ENCODE measurements at regions of chr11 and their contacts with region 1.

Region 1: DNA sequence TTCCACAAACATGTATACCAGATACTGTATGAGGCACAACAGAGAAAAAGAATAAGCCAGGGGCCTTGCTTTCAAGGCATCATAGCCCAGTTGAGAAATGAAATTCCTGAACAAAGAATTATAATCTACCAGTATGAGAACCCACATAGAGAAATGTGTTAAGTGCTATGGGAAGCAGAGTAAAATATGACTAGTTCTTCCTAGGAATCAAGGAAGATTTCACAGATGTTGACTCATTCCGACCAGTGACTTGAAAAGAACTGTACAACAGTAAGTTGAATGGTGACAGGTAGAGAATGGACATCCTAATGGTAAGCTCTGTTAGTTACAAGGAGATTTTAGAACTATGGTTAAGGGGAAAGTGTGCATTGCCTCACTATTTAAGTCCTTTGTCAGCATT is 102.6 kb downstream of the TRIM44 start:
- DNase-seq: no peak
- H3K4me3 ChIP-seq: no peak overlapping the region
- H3K27ac ChIP-seq: no peak overlapping the region
- H3K4me1 ChIP-seq: no peaks in the 10 kb centered on the region
- H3K27me3 ChIP-seq: no peaks in the 10 kb centered on the region
- CTCF ChIP-seq: no peak

Region 2: DNA sequence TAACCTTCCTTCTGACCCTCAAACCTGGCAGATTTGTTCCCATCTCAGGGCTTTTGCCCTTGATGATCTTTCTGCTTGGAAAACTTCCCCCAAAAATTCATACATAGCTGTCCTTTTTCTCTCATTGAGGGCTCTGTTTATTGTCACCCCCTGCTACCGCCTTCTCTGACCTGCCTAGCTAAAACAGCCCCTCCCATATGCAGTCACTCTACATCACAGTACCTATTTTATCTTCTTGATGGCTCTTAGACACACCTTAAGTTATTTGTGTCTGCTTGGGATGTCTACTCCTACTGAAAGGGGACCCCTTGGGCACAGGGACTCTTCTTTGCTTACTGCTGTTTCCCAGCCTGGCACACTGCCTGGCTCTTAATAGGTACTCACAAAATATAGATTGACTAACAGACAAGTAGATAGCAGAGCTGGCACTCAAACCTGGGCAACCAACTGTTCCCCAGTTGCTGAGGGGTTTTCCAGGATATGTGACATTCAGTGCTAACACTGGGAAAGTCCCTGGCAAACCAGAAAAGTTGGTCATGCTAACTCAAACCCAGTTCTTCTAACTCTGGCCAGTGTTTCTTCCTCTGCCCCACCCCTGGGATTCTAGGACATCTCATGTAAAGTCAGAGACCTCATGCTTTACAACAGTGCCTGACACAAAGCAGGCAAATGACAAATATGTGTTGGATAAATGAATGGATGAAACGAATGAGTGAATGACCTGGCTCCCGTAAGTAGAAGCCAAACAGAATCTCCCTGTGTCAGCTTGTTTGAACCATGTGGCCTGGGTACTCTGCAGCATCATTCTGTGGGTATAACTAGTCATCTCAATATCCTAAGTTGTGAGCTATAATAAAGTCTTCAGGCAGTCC is 166.7 kb before region 1 on chr11:
- CTCF ChIA-PET with region 1: no interaction called
- dilution Hi-C with region 1: no loop called
- in situ Hi-C with region 1: no loop called
- intact Hi-C with region 1: no loop called
- DNase-seq: peak; percentile 96
- H3K4me3 ChIP-seq: no peak overlapping the region
- H3K27ac ChIP-seq: peak overlapping the region; percentile 14
- H3K4me1 ChIP-seq: peaks cover 32% of the 10 kb centered on the region
- H3K27me3 ChIP-seq: no peaks in the 10 kb centered on the region
- CTCF ChIP-seq: no peak

Region 3: DNA sequence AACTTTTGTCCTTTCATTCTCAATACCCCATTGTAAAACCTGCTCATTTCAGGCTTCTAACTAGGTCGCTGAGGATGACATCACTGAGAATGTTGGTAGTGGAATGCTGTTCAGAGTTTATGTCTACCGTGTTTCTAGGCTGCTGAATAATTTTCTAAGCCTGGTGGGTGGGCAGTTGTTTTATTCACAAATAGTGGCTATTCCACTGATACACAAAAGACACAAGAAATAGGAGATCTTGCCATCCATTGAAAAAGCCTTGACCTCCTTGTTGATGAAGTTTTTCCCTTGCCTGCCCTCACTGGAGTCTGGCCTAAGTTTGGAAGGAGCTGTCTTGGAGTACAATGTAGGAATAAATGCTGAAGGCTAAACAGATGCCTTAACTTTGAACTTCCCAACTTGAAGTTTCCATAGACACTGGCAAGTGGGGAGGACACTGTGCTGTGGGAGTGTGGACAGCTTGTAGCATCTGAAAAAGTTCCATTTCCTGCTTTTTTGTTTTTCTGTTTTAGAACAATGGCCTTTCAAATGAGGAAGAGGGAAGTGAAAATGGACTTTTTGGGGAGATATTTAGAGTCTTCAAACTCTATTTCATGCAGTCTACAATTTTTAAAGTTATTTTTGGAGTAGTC is 43.4 kb before region 1 on chr11:
- CTCF ChIA-PET with region 1: no interaction called
- dilution Hi-C with region 1: loop called (anchors 5 kb)
- in situ Hi-C with region 1: no loop called
- intact Hi-C with region 1: no loop called
- DNase-seq: no peak
- H3K4me3 ChIP-seq: no peak overlapping the region
- H3K27ac ChIP-seq: no peak overlapping the region
- H3K4me1 ChIP-seq: peaks cover 11% of the 10 kb centered on the region
- H3K27me3 ChIP-seq: no peaks in the 10 kb centered on the region
- CTCF ChIP-seq: no peak

Region 4: GRCh38 chr11:35815556-35816315 is 50.5 kb after region 1 on chr11:
- CTCF ChIA-PET with region 1: no interaction called
- dilution Hi-C with region 1: loop called (anchors 5 kb)
- in situ Hi-C with region 1: no loop called
- intact Hi-C with region 1: no loop called
- DNase-seq: no peak
- H3K4me3 ChIP-seq: no peak overlapping the region
- H3K27ac ChIP-seq: no peak overlapping the region
- H3K4me1 ChIP-seq: peaks cover 9% of the 10 kb centered on the region
- H3K27me3 ChIP-seq: no peaks in the 10 kb centered on the region
- CTCF ChIP-seq: no peak

Region 5: GRCh38 chr11:35845860-35846259 is 80.6 kb after region 1 on chr11:
- CTCF ChIA-PET with region 1: no interaction called
- dilution Hi-C with region 1: no loop called
- in situ Hi-C with region 1: no loop called
- intact Hi-C with region 1: no loop called
- DNase-seq: peak; percentile 54
- H3K4me3 ChIP-seq: no peak overlapping the region
- H3K27ac ChIP-seq: no peak overlapping the region
- H3K4me1 ChIP-seq: peaks cover 3% of the 10 kb centered on the region
- H3K27me3 ChIP-seq: peaks cover 3% of the 10 kb centered on the region
- CTCF ChIP-seq: no peak